Panc1 (cell line): ENCODE measurements at regions of chr18 and their contacts with region 1.

Region 1: DNA sequence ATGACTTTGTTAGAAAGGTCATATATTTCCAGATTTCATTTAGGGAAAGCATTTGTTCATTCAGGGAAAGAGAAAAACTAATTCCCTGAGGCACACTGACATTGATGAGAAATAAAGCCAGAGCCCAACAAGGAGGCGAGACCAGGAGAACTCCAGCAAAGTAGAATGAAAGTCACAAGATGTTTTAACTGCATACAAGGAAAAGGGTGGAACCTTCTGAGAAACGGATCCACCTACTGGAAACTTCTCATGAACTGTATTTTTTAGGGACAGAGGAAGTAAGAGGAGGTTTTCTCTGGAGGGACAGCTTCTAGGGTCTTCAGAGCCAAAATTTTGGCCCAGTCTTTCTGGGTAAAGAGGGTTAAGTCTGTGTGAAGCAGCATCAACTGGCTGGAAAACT is 548.2 kb upstream of the PIK3C3 start:
- DNase-seq: no peak
- ATAC-seq: no peak
- H3K4me3 ChIP-seq: no peak overlapping the region
- H3K27ac ChIP-seq: no peak overlapping the region
- H3K4me1 ChIP-seq: no peaks in the 10 kb centered on the region
- H3K27me3 ChIP-seq: no peaks in the 10 kb centered on the region
- CTCF ChIP-seq: no peak

Region 2: GRCh38 chr18:41338341-41338740 is 68.5 kb before region 1 on chr18:
- CTCF ChIA-PET with region 1: no interaction called
- POLR2A ChIA-PET with region 1: no interaction called
- in situ Hi-C with region 1: no loop called
- intact Hi-C with region 1: no loop called
- DNase-seq: no peak
- ATAC-seq: no peak
- H3K4me3 ChIP-seq: no peak overlapping the region
- H3K27ac ChIP-seq: no peak overlapping the region
- H3K4me1 ChIP-seq: no peaks in the 10 kb centered on the region
- H3K27me3 ChIP-seq: no peaks in the 10 kb centered on the region
- CTCF ChIP-seq: no peak

Region 3: DNA sequence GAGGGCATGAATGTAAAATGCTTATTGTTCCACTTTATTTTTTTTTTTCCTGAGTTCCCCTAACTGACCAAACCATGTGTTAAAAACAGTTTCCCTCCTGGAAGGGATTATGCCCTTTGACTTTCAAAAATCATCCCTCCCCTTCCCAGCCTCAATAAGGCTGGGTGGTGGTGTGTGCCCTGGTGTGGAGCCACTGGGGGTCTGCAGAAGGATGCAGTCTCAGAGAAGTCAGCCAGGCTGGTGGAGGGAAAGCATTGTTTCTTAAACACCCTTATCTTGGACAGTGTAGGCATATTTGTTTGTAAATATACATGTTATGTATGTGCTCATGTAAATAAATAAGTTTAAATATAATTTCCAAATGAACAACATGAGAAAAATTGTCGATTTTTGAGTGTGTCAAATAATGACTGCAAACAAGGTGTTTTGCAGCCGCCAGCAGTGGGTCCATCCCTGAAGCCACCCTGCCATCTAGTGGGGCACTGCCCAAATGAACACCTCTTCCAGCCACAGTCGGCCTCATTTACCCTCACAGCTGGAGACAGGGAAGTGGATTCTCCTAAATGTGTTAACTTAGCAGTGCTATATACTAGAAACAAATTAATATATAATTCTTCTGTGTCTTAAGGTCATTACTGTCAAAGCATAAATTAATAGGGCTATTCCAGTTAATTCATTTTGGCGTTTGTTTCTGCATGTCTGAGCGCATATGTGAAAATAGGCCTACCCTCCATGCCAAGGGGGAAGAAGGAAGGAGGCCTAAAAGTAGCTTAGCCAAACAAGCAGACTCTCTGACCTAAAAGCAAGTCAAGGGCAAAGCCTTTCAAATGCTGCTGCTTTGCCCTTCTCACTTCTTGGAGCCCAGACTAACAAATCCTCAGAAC is 338.6 kb after region 1 on chr18:
- CTCF ChIA-PET with region 1: no interaction called
- POLR2A ChIA-PET with region 1: no interaction called
- in situ Hi-C with region 1: no loop called
- intact Hi-C with region 1: loop called (anchors 10 kb)
- DNase-seq: peak; percentile 15
- ATAC-seq: peak; percentile 80; the same call in 1 of the 2 replicates
- H3K4me3 ChIP-seq: no peak overlapping the region
- H3K27ac ChIP-seq: no peak overlapping the region
- H3K4me1 ChIP-seq: no peaks in the 10 kb centered on the region
- H3K27me3 ChIP-seq: no peaks in the 10 kb centered on the region
- CTCF ChIP-seq: peak; percentile 69